CD4-positive, alpha-beta T cell (primary cell): ENCODE measurements at regions of chr2 and their contacts with region 1.

Region 1: DNA sequence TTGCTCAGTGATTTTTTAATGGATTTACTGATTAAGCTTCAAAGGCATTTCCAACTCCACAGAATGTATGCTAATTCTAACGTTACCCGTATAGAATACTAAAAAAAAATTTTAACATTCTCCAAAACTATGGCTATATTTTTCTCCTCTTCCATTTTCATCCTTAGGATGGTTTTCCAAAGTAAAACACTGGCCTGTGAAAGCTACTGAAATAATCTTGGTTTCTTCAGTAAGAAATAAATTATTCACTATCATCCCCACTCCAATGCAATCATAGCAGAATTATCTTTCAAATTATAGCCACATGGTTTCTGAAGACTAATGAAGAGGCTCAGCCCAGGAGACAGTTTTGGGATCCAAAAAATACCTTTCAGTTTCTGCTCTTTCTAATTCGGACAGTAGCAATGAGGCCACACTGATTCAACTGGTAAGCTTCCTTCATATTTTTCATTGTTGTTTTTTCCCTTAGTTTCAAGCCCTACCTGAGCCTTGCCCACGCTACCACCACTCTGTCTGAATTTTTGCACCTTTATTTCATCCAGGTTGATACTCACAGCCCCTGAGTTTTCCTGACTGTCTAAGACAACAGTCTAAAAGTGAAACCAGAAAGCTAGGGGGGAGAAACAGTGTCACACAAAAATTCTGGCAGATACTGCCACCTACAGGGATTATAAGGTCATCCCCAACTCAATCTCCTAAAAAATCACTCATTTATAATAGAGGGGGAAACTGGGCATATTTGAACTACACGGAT is 887.9 kb downstream of the NRXN1 start:
- DNase-seq: peak in 3 of 14 experiments; percentile 11 to 29 (median 24)
- ATAC-seq: no peak
- H3K4me3 ChIP-seq: no peak overlapping the region
- H3K4me3 Mint-ChIP-seq: peak overlapping the region; percentile 75
- H3K27ac ChIP-seq: no peak overlapping the region
- H3K27ac Mint-ChIP-seq: no peak overlapping the region
- H3K4me1 ChIP-seq: no peaks in the 10 kb centered on the region
- H3K4me1 Mint-ChIP-seq: peaks cover 4% of the 10 kb centered on the region
- H3K27me3 ChIP-seq: no peaks in the 10 kb centered on the region
- H3K27me3 Mint-ChIP-seq: no peaks in the 10 kb centered on the region
- CTCF ChIP-seq: no peak

Region 2: GRCh38 chr2:48946449-48947048 is 1197.5 kb before region 1 on chr2:
- CTCF ChIA-PET with region 1: interaction called, 6 read pairs
- POLR2A ChIA-PET with region 1: no interaction called
- intact Hi-C with region 1: loop called (anchors 2 to 10 kb)
- DNase-seq: peak in 11 of 14 experiments; percentile 0 to 61 (median 12)
- ATAC-seq: peak; percentile 83
- H3K4me3 ChIP-seq: no peak overlapping the region
- H3K4me3 Mint-ChIP-seq: no peak overlapping the region
- H3K27ac ChIP-seq: no peak overlapping the region
- H3K27ac Mint-ChIP-seq: no peak overlapping the region
- H3K4me1 ChIP-seq: no peaks in the 10 kb centered on the region
- H3K4me1 Mint-ChIP-seq: no peaks in the 10 kb centered on the region
- H3K27me3 ChIP-seq: no peaks in the 10 kb centered on the region
- H3K27me3 Mint-ChIP-seq: no peaks in the 10 kb centered on the region
- CTCF ChIP-seq: peak; percentile 85

Region 3: GRCh38 chr2:49621016-49621415 is 523.0 kb before region 1 on chr2:
- CTCF ChIA-PET with region 1: no interaction called
- POLR2A ChIA-PET with region 1: no interaction called
- intact Hi-C with region 1: no loop called
- DNase-seq: no peak
- ATAC-seq: no peak
- H3K4me3 ChIP-seq: no peak overlapping the region
- H3K4me3 Mint-ChIP-seq: no peak overlapping the region
- H3K27ac ChIP-seq: no peak overlapping the region
- H3K27ac Mint-ChIP-seq: no peak overlapping the region
- H3K4me1 ChIP-seq: no peaks in the 10 kb centered on the region
- H3K4me1 Mint-ChIP-seq: no peaks in the 10 kb centered on the region
- H3K27me3 ChIP-seq: no peaks in the 10 kb centered on the region
- H3K27me3 Mint-ChIP-seq: no peaks in the 10 kb centered on the region
- CTCF ChIP-seq: no peak

Region 4: DNA sequence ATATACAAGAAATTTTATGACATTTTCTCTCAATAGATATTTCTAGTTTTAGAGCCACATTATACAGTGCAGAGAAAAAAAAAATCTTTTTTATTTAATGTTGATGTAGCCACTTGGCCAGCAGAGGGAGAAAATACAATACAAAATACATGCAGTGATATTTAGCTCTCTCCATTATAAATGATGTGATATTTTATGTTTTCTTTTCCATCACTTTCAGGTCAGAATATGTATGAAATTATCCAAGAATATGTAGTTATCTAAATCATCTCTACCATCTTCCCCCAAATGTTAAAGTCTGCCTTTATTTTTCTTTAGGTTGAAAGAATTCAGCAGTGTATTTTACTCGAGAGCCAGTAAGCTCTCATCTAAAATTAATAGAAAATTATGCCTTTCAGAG is 456.1 kb before region 1 on chr2:
- CTCF ChIA-PET with region 1: interaction called, 3 read pairs
- POLR2A ChIA-PET with region 1: no interaction called
- intact Hi-C with region 1: loop called in 1 of 2 experiments (anchors 2 kb)
- DNase-seq: no peak
- ATAC-seq: no peak
- H3K4me3 ChIP-seq: no peak overlapping the region
- H3K4me3 Mint-ChIP-seq: no peak overlapping the region
- H3K27ac ChIP-seq: no peak overlapping the region
- H3K27ac Mint-ChIP-seq: no peak overlapping the region
- H3K4me1 ChIP-seq: no peaks in the 10 kb centered on the region
- H3K4me1 Mint-ChIP-seq: no peaks in the 10 kb centered on the region
- H3K27me3 ChIP-seq: no peaks in the 10 kb centered on the region
- H3K27me3 Mint-ChIP-seq: no peaks in the 10 kb centered on the region
- CTCF ChIP-seq: no peak